ENCODE measurements at regions of chr1 and their contacts with region 1.

Region 1: GRCh38 chr1:40755067-40755466 is 28.5 kb upstream of the KCNQ4 start:
- DNase-seq: no peak
- ATAC-seq: no peak
- H3K4me3 ChIP-seq: no peak overlapping the region
- H3K27ac ChIP-seq: peak overlapping the region; percentile 13
- H3K4me1 ChIP-seq: peaks cover 57% of the 10 kb centered on the region
- H3K27me3 ChIP-seq: no peaks in the 10 kb centered on the region
- CTCF ChIP-seq: no peak
- EP300 ChIP-seq: no peak
- POLR2A ChIP-seq: no peak
- RAD21 ChIP-seq: no peak

Region 2: GRCh38 chr1:40449684-40450494 is 305.2 kb before region 1 on chr1 and contains the start of gene ZFP69B:
- CTCF ChIA-PET with region 1: no interaction called
- POLR2A ChIA-PET with region 1: no interaction called
- in situ Hi-C with region 1: no loop called
- intact Hi-C with region 1: no loop called
- DNase-seq: peak; percentile 85
- ATAC-seq: peak; percentile 98
- H3K4me3 ChIP-seq: peak within 1 kb of the TSS; percentile 73 to 87 (median 86)
- H3K27ac ChIP-seq: peak within 1 kb of the TSS; percentile 78
- H3K4me1 ChIP-seq: peaks cover 26% of the 10 kb centered on the region
- H3K27me3 ChIP-seq: no peaks in the 10 kb centered on the region; a peak in 2 of 5 replicates
- CTCF ChIP-seq: peak; percentile 46
- EP300 ChIP-seq: no peak
- POLR2A ChIP-seq: peak; percentile 61 to 83; a peak in 3 of 4 replicates
- RAD21 ChIP-seq: peak; percentile 63
- total RNA-seq, gene ZFP69B: 7.7 and 10.8 TPM in 2 replicates

Region 3: DNA sequence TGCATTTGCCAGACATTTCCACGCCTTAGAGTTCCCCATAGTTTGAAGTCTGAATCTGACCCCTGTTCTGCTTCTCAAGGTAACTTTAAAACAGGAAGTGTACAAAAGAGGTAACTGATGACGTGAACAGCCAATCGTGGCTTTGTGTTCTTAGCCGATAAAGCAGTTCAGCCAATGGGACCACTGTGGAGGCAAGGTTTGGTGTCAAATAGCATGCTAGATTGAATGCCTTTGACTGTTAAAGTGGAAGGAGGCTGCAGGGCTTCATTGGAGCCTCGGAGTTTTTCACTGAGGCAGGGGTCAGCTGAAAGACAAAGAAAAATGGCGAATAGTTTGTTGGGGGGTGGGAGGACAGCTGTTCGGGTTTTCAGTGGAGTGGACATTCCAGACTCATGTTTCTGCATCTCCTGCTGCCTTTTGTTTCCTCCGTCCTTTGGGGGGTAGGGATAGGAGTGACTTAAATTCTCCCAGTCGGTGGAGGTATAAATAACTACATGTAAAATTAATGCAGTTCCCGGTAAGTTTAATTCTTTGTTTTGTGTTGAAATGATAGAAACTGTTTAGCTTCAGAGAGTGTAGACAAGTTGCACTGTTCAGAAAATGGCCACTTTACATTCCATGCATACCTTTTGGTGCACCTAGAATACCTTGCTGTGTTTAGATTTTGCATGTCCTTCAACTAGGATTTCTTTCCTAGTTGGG is 45.8 kb before region 1 on chr1:
- CTCF ChIA-PET with region 1: no interaction called
- POLR2A ChIA-PET with region 1: interaction called, 44 read pairs
- in situ Hi-C with region 1: no loop called
- intact Hi-C with region 1: no loop called
- DNase-seq: peak; percentile 97
- ATAC-seq: peak; percentile 95
- H3K4me3 ChIP-seq: peak overlapping the region; percentile 63 to 85 (median 76)
- H3K27ac ChIP-seq: peak overlapping the region; percentile 96
- H3K4me1 ChIP-seq: peaks cover 67% of the 10 kb centered on the region
- H3K27me3 ChIP-seq: no peaks in the 10 kb centered on the region; a peak in 1 of 5 replicates
- CTCF ChIP-seq: no peak
- EP300 ChIP-seq: peak in 1 of 2 experiments; percentile 14; a peak in 1 of 4 replicates
- POLR2A ChIP-seq: peak; percentile 75 to 94
- RAD21 ChIP-seq: no peak

Region 4: DNA sequence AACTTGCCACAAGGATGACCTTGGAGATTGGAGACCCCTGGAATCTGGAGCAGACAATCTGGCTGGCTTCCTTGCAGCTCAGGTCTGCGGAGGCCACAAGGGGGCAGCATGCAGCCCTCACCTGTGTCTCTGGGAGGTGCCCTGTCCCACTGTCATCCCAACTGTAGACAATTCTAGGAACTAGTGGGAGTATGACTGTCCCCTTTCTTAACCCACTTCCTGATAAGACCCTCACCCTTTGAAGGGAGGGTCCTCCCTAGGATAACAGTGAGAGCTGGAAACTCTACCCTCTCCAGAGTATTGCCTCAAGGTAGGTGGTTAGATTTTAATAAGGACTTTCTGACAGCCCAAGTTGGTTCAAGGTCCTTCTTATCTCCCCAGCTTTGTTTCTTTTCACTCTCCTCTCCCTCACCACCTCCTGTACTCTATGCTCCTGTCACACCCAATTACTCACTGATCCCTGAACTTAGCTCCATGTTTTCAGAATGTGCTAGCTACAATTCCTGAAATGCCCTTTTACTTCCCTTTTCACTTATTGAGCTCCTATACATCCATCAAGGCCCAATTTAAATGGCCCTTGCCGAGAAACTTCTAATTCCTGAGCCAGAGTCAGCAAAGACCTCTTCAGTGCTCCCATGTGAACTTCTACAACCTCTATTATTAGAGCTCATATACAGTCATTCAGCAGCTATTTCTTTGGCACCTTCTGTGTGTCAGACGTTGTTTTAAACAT is 19.4 kb after region 1 on chr1:
- CTCF ChIA-PET with region 1: no interaction called
- POLR2A ChIA-PET with region 1: interaction called, 12 read pairs
- in situ Hi-C with region 1: no loop called
- intact Hi-C with region 1: no loop called
- DNase-seq: peak; percentile 36
- ATAC-seq: peak; percentile 83
- H3K4me3 ChIP-seq: no peak overlapping the region
- H3K27ac ChIP-seq: peak overlapping the region; percentile 35
- H3K4me1 ChIP-seq: peaks cover 19% of the 10 kb centered on the region
- H3K27me3 ChIP-seq: no peaks in the 10 kb centered on the region
- CTCF ChIP-seq: peak; percentile 90
- EP300 ChIP-seq: no peak
- POLR2A ChIP-seq: no peak
- RAD21 ChIP-seq: peak; percentile 66

Measured in HepG2 (cell line).